CD14-positive monocyte (primary cell): ENCODE measurements at regions of chr19 and their contacts with region 1.

Region 1: GRCh38 chr19:45423589-45424190 is at the start of gene ERCC1:
- DNase-seq: peak; percentile 69 to 79 (median 70)
- H3K4me3 ChIP-seq: peak within 1 kb of the TSS; percentile 66 to 93 (median 76)
- H3K4me3 Mint-ChIP-seq: peak within 1 kb of the TSS; percentile 92 to 93
- H3K27ac ChIP-seq: peak within 1 kb of the TSS; percentile 88 to 94
- H3K27ac Mint-ChIP-seq: peak within 1 kb of the TSS; percentile 93 to 99 (median 96)
- H3K4me1 ChIP-seq: peaks cover 60 to 84% of the 10 kb centered on the region in 2 donors
- H3K4me1 Mint-ChIP-seq: peaks cover 66% of the 10 kb centered on the region
- H3K27me3 ChIP-seq: peaks cover 3 to 5% of the 10 kb centered on the region in 2 donors
- H3K27me3 Mint-ChIP-seq: peaks cover 6 to 12% (median 10%) of the 10 kb centered on the region in 3 donors
- CTCF ChIP-seq: no peak
- polyA plus RNA-seq, gene ERCC1: 62.2 to 78.2 (median 74.6) TPM

Region 2: DNA sequence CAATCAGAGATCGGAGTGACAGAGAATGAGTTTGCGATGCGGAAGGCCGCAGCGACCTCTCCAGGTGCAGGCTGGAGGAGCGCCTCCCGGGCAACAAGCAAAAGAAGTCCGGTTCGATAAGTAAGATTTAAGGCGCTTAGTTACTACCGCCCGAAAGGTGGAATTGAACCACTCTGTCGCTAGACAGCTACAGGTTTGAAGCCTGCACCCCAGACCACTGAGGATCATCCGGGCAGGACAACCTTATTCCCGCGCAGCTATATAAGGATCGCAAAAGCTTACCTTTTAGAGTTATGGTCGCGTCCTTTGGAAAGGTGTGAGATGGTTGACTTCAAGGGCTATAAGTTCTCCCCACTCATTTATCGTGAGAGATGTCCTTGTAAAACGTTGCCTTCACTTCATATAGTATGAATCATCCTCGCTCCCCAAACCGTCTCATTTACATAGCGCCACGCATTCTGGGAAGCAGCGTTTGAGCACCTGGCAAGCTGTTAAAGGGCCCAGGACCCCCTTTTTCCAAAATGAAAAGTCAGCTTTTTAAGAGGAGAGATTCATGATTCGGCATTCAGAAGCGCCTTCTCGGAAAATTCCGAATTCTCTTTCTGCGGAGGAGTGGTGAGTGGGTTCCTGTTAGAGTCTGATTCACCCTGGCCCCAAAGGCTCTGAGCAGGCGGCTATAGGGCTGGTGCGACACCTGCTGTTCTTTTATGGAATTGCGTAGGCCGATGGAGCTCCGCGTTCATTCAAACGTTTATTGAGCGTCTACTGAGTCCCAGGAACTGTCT is 55.0 kb after region 1 on chr19:
- intact Hi-C with region 1: loop called in 1 of 2 experiments (anchors 2 kb)
- DNase-seq: peak; percentile 86 to 94 (median 92)
- H3K4me3 ChIP-seq: peak overlapping the region; percentile 38 to 74 (median 53)
- H3K4me3 Mint-ChIP-seq: peak overlapping the region; percentile 83 to 87
- H3K27ac ChIP-seq: peak overlapping the region; percentile 73 to 91
- H3K27ac Mint-ChIP-seq: peak overlapping the region; percentile 73 to 98 (median 94)
- H3K4me1 ChIP-seq: peaks cover 15 to 16% of the 10 kb centered on the region in 2 donors
- H3K4me1 Mint-ChIP-seq: peaks cover 29% of the 10 kb centered on the region
- H3K27me3 ChIP-seq: peaks cover 0 to 29% of the 10 kb centered on the region in 2 donors
- H3K27me3 Mint-ChIP-seq: peaks cover 34 to 50% (median 43%) of the 10 kb centered on the region in 3 donors
- CTCF ChIP-seq: peak; percentile 83